Activated naive CD4-positive, alpha-beta T cell treated with anti-CD3 and anti-CD28 coated beads, Interleukin-2, amount 10 ng/mL, durations not matched to agents 7 days and 5 days (primary cell): ENCODE measurements at regions of chr3 and their contacts with region 1.

Region 1: GRCh38 chr3:122754929-122755328 is 38.7 kb downstream of the HSPBAP1 start:
- DNase-seq: no peak
- H3K4me3 Mint-ChIP-seq: no peak overlapping the region
- H3K27ac Mint-ChIP-seq: no peak overlapping the region
- H3K4me1 Mint-ChIP-seq: peaks cover 10% of the 10 kb centered on the region
- H3K27me3 Mint-ChIP-seq: no peaks in the 10 kb centered on the region

Region 2: GRCh38 chr3:122766430-122766829 is 11.5 kb after region 1 on chr3:
- CTCF ChIA-PET with region 1: interaction called, 11 read pairs
- DNase-seq: no peak
- H3K4me3 Mint-ChIP-seq: no peak overlapping the region
- H3K27ac Mint-ChIP-seq: no peak overlapping the region
- H3K4me1 Mint-ChIP-seq: no peaks in the 10 kb centered on the region
- H3K27me3 Mint-ChIP-seq: no peaks in the 10 kb centered on the region